Activated B cell treated with CpG ODN at 0.5 μM for 24 hours (primary cell): ENCODE measurements at regions of chr10 and their contacts with region 1.

Region 1: DNA sequence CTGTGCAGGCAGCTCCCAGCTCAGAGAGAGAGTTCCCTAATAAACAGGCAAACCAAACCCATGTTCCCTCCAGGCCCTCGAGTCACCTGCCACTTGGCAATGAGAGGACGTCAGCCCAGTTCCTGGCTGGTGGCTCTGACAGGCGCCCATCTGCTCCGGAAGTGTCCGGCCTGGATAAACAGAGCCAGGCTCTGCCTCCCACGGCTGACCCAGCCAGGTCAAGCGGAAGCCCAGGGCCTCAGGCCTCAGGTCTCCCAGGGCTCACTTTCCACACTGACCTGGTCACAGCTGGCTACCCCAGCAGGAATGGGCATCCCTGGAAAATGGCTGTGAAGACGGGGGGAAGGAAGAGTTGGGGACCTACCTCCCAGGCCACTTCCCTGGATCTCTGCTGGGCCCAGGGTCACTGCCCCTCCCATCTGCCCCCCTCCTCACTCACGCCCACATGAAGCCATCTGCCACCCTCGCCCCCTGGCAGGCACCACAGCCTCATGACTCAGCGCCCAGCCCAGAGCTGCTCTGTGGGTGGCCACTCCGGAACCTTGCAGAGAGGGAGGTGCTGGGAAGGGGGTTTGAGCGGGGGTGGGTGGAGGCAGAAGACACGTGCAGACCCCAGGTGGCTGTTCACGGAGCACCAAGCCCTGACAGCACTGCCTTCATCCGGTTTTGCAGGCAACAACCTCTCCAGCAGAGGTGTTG is 37.4 kb upstream of the DUSP5 start:
- DNase-seq: peak; percentile 40
- ATAC-seq: peak; percentile 68
- H3K4me3 Mint-ChIP-seq: peak overlapping the region; percentile 38
- H3K27ac Mint-ChIP-seq: peak overlapping the region; percentile 71
- H3K4me1 Mint-ChIP-seq: peaks cover 75% of the 10 kb centered on the region
- H3K27me3 Mint-ChIP-seq: no peaks in the 10 kb centered on the region
- CTCF ChIP-seq: no peak

Region 2: DNA sequence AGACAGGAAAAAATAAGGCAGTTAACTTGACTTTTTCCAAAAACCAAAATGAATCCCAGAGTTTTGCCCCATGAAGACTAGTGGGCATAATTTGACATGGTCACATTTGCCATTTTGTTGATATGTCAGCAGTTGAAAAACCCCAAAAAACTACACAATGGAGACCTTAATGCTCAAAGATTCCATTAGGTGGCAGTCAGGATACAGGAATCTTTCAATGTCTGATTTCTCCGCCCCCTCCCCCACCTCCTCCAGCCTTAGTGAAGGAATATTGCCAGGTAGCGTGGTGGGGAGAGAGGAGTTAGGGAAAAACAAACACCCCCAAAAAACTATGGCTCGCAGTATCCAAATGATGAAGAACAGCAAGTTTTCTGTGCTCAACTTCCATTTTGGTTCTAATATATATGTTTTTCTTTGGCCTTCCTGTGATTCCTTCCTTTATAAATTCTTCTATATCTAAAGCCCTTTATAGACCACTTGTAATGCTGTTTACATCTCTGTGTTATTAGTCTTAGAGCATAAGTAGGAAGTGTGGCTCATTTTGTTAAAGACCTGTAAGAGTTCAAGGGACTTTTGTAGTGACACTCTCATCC is 148.8 kb before region 1 on chr10:
- CTCF ChIA-PET with region 1: no interaction called
- POLR2A ChIA-PET with region 1: no interaction called
- intact Hi-C with region 1: loop called (anchors 1 kb)
- DNase-seq: no peak
- ATAC-seq: peak; percentile 83
- H3K4me3 Mint-ChIP-seq: no peak overlapping the region
- H3K27ac Mint-ChIP-seq: peak overlapping the region; percentile 13
- H3K4me1 Mint-ChIP-seq: peaks cover 19% of the 10 kb centered on the region
- H3K27me3 Mint-ChIP-seq: no peaks in the 10 kb centered on the region
- CTCF ChIP-seq: no peak

Region 3: GRCh38 chr10:110425684-110426293 is 34.5 kb before region 1 on chr10:
- CTCF ChIA-PET with region 1: no interaction called
- POLR2A ChIA-PET with region 1: no interaction called
- intact Hi-C with region 1: loop called (anchors 2 kb)
- DNase-seq: no peak
- ATAC-seq: peak; percentile 78
- H3K4me3 Mint-ChIP-seq: no peak overlapping the region
- H3K27ac Mint-ChIP-seq: peak overlapping the region; percentile 38
- H3K4me1 Mint-ChIP-seq: peaks cover 41% of the 10 kb centered on the region
- H3K27me3 Mint-ChIP-seq: peaks cover 7% of the 10 kb centered on the region
- CTCF ChIP-seq: no peak

Region 4: GRCh38 chr10:110502851-110503301 is 42.6 kb after region 1 on chr10:
- CTCF ChIA-PET with region 1: no interaction called
- POLR2A ChIA-PET with region 1: interaction called, 6 read pairs
- intact Hi-C with region 1: loop called (anchors 1 kb)
- DNase-seq: no peak
- ATAC-seq: peak; percentile 53
- H3K4me3 Mint-ChIP-seq: peak overlapping the region; percentile 72
- H3K27ac Mint-ChIP-seq: peak overlapping the region; percentile 90
- H3K4me1 Mint-ChIP-seq: peaks cover 76% of the 10 kb centered on the region
- H3K27me3 Mint-ChIP-seq: no peaks in the 10 kb centered on the region
- CTCF ChIP-seq: no peak

Region 5: GRCh38 chr10:110513949-110514348 is 53.7 kb after region 1 on chr10:
- CTCF ChIA-PET with region 1: no interaction called
- POLR2A ChIA-PET with region 1: no interaction called
- intact Hi-C with region 1: no loop called
- DNase-seq: no peak
- ATAC-seq: no peak
- H3K4me3 Mint-ChIP-seq: no peak overlapping the region
- H3K27ac Mint-ChIP-seq: peak overlapping the region; percentile 41
- H3K4me1 Mint-ChIP-seq: peaks cover 25% of the 10 kb centered on the region
- H3K27me3 Mint-ChIP-seq: no peaks in the 10 kb centered on the region
- CTCF ChIP-seq: no peak

Region 6: DNA sequence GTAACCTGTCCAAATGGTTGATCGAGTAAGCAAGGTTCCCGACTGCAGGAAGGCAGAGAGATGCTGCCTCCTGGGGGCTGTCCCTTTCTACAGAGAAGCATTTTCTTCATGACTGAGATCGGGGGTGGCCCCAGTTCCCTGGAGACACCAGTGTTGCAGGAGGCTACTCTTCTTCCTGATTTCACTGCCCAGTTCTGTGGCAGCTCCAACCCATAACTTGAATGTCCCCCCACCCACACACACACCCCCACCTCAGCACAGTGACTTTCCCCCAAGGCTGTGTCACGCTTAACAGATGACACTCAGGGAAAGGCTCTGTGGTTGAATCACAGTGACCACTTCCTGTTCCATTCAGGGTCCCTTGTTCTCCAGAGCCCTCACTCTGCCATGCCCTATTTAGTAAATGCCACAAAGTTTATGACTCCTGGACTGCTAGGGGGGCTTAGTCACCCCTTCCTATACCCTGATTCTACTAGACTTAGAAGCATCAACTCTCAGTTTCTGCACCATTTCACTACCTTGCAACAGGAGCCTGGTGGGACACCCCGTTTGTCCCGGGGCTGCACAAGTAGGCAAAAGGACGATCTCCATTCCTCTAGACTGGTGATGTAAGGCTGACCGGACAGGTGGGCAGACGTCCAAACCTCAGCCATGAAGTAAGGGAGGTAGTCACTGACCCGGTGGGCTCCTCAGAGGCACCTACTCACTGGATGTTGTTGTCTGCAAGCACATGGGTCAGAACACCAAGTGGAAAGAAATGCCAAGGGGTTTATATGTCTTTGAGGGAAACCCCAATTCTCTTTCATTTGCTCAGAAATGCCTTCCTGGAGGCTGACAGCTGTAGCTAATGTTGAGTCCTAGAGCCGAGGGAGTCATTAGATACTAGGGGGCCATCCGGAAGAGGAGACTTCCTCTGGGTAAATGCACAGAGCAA is 76.0 kb after region 1 on chr10:
- CTCF ChIA-PET with region 1: no interaction called
- POLR2A ChIA-PET with region 1: no interaction called
- intact Hi-C with region 1: loop called (anchors 2 kb)
- DNase-seq: peak; percentile 49
- ATAC-seq: peak; percentile 83
- H3K4me3 Mint-ChIP-seq: peak overlapping the region; percentile 62
- H3K27ac Mint-ChIP-seq: peak overlapping the region; percentile 68
- H3K4me1 Mint-ChIP-seq: peaks cover 31% of the 10 kb centered on the region
- H3K27me3 Mint-ChIP-seq: peaks cover 4% of the 10 kb centered on the region
- CTCF ChIP-seq: no peak